Caco-2 (cell line): ENCODE measurements at regions of chr16 and their contacts with region 1.

Region 1: GRCh38 chr16:10971560-10971961 is 27.2 kb downstream of the CLEC16A start:
- DNase-seq: peak; percentile 53 to 56
- H3K4me3 ChIP-seq: no peak overlapping the region
- H3K4me3 Mint-ChIP-seq: no peak overlapping the region
- H3K27ac Mint-ChIP-seq: no peak overlapping the region
- H3K4me1 ChIP-seq: 0 out of 2 replicates have a peak, but pooled peaks cover 3% of the 10 kb centered on the region
- H3K4me1 Mint-ChIP-seq: no peaks in the 10 kb centered on the region
- H3K27me3 ChIP-seq: no peaks in the 10 kb centered on the region
- H3K27me3 Mint-ChIP-seq: no peaks in the 10 kb centered on the region
- CTCF ChIP-seq: peak; percentile 52 to 67

Region 2: GRCh38 chr16:10835281-10835931 is 136.2 kb before region 1 on chr16:
- CTCF ChIA-PET with region 1: no interaction called
- POLR2A ChIA-PET with region 1: no interaction called
- intact Hi-C with region 1: no loop called
- DNase-seq: no peak
- H3K4me3 ChIP-seq: no peak overlapping the region
- H3K4me3 Mint-ChIP-seq: no peak overlapping the region
- H3K27ac Mint-ChIP-seq: no peak overlapping the region
- H3K4me1 ChIP-seq: no peaks in the 10 kb centered on the region
- H3K4me1 Mint-ChIP-seq: no peaks in the 10 kb centered on the region
- H3K27me3 ChIP-seq: no peaks in the 10 kb centered on the region
- H3K27me3 Mint-ChIP-seq: peaks cover 2% of the 10 kb centered on the region
- CTCF ChIP-seq: no peak

Region 3: GRCh38 chr16:11356573-11357331 is 385.2 kb after region 1 on chr16:
- CTCF ChIA-PET with region 1: no interaction called
- POLR2A ChIA-PET with region 1: no interaction called
- intact Hi-C with region 1: loop called (anchors 2 kb)
- DNase-seq: peak; percentile 60 to 66
- H3K4me3 ChIP-seq: no peak overlapping the region
- H3K4me3 Mint-ChIP-seq: no peak overlapping the region
- H3K27ac Mint-ChIP-seq: no peak overlapping the region
- H3K4me1 ChIP-seq: peaks cover 38% of the 10 kb centered on the region
- H3K4me1 Mint-ChIP-seq: peaks cover 6% of the 10 kb centered on the region
- H3K27me3 ChIP-seq: no peaks in the 10 kb centered on the region
- H3K27me3 Mint-ChIP-seq: no peaks in the 10 kb centered on the region
- CTCF ChIP-seq: peak; percentile 54 to 67